ENCODE measurements at regions of chr6 and their contacts with region 1.

Region 1: DNA sequence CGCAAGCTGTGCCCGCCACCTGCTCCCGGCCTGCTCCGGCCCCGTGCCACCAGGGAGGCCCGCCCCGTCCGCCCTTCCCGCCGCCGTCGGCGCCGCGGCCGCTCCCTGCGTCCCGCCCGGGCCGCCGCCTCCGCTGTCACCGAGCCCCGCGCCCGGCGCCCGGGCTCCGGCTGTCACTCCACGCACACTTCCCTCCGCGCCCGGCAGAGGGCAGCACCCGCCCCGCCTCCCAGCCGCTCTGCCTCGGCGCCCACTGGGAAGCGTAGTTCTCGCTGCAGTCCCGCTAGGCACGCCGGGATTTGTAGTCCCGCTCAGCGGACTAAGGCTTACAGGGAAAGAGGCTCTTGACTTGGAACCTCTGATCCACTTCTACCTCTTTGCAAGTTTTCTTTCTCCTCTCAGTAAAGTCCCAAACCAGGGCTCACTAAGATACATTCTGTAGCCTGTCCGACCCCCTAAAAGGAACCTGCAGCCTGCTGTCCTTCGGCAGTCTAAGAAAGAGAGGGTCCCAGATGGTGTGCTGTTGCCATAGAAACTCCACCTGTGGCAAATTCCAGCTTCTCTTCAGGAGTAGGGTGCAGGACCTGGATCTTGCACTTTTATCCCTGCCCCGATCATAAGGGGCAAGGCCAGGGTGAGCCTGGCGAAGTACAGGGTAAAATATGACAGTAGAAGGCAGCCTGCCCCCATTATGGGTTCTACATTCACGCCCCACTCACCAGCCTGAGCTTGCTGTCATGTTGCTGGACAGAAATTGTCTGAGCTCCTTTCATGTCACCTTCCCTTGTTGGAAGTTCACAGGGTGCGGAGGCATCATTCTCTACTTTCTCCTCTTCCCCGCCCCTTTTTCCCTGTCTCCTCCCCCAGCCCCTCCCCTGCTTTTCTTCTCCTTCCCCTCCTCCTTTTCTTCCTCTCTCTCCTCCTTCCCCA is at the start of gene TFEB:
- DNase-seq: peak; percentile 93
- H3K4me3 ChIP-seq: peak within 1 kb of the TSS; percentile 91
- H3K27ac ChIP-seq: peak within 1 kb of the TSS; percentile 94
- H3K4me1 ChIP-seq: peaks cover 41% of the 10 kb centered on the region
- CTCF ChIP-seq: peak; percentile 76
- total RNA-seq, gene TFEB: 25.3 and 36.8 TPM in 2 replicates

Region 2: GRCh38 chr6:41072676-41073623 is 662.7 kb before region 1 on chr6 and contains the start of gene NFYA:
- CTCF ChIA-PET with region 1: interaction called, 6 read pairs
- POLR2A ChIA-PET with region 1: no interaction called
- intact Hi-C with region 1: loop called (anchors 5 kb)
- DNase-seq: peak; percentile 99
- H3K4me3 ChIP-seq: peak within 1 kb of the TSS; percentile 97
- H3K27ac ChIP-seq: peak within 1 kb of the TSS; percentile 92
- H3K4me1 ChIP-seq: peaks cover 47% of the 10 kb centered on the region
- CTCF ChIP-seq: peak; percentile 55
- total RNA-seq, gene NFYA: 23.5 and 29.5 TPM in 2 replicates

Region 3: GRCh38 chr6:41602864-41603608 is 132.7 kb before region 1 on chr6:
- CTCF ChIA-PET with region 1: no interaction called
- POLR2A ChIA-PET with region 1: no interaction called
- intact Hi-C with region 1: loop called (anchors 1 kb)
- DNase-seq: peak; percentile 89
- H3K4me3 ChIP-seq: peak overlapping the region; percentile 47
- H3K27ac ChIP-seq: no peak overlapping the region
- H3K4me1 ChIP-seq: peaks cover 9% of the 10 kb centered on the region
- CTCF ChIP-seq: peak; percentile 99

Region 4: DNA sequence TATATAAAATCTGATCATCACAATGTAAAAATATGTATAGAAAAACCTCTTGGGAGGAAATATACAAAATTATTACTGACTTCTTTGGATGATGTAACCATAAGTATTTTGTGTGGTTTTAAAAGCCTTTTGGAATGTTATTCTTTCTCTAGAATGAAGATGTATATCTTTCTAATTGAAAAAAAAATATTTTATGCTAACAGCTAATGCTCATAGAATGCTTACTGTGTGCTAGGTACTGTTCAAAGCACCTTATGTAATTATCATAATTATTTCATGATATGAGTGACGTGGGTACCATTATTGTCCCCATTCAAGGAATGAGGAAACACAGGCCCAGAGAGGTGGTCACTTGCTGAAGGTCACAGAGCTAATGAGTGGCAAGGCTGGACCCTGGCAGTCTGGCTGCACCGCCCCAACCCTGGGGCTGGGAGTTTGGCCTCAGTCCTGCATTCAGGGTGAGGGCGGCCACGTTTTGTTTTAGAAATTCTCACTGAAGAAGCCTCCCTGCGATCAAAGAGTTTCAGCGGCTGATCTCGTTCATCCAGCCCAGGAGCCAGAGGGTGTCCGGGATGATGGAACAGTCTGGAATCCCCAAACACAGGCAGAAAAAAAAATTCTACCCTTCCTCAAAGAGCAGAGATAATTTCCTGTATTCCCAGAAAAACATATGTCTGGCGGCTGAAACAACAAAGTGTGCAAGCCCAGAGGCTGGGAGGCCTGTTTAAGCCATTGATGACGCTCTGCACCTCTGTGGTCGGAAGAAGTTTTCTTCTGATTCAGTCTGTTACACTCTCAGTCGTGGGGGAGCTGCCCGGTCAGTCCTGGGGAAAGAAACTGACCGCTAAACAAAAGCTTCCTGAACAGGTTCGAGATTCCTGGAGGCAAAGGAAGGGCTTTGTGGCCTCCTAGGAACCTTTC is 37.6 kb before region 1 on chr6:
- CTCF ChIA-PET with region 1: interaction called, 3 read pairs
- POLR2A ChIA-PET with region 1: interaction called, 118 read pairs
- intact Hi-C with region 1: loop called (anchors 5 kb)
- DNase-seq: no peak
- H3K4me3 ChIP-seq: no peak overlapping the region
- H3K27ac ChIP-seq: no peak overlapping the region
- H3K4me1 ChIP-seq: peaks cover 13% of the 10 kb centered on the region
- CTCF ChIP-seq: no peak

Region 5: DNA sequence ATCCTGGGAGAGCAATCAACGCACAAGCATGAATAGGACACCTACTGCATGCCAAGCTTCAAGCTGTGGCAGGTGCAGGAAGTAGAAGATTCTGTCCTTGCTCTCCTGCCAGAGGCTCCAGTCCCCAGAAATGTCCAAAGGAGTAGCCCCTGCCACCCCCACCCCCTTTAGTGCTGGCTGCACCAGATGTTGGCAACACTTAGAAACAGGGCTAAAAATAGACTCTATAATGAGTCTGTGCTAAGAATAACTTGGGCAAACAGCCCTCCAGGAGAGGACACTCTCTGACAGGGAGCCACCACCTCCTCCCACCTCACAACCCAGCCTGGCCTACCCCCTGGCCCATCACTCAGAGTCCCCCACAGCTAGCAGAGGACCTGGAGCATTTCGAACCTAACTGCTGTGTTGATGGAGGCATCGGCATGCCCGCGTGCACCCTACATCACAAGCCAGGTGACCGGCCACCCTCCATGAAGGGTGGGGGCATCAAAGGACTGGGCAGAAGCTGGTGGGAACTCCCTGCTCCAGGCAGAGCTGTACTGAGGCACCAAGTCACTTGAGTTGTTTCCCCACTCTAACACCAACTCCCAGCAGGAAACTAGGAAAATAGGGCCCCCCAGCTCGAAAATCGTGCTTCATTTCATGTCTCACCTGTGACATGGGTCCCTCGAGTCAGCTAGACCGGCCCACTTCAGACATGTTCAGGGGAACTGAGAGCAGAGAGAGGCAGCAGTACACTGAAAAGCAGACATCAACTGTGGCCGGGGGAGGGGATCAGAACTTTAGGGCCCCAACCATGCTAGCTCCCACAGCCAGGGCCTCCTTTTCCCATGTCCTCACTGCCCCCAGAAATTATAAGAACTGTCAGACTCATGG is 18.9 kb before region 1 on chr6:
- CTCF ChIA-PET with region 1: interaction called, 12 read pairs
- POLR2A ChIA-PET with region 1: interaction called, 31 read pairs
- intact Hi-C with region 1: no loop called
- DNase-seq: peak; percentile 41
- H3K4me3 ChIP-seq: peak overlapping the region; percentile 29
- H3K27ac ChIP-seq: peak overlapping the region; percentile 63
- H3K4me1 ChIP-seq: peaks cover 81% of the 10 kb centered on the region
- CTCF ChIP-seq: no peak

Region 6: DNA sequence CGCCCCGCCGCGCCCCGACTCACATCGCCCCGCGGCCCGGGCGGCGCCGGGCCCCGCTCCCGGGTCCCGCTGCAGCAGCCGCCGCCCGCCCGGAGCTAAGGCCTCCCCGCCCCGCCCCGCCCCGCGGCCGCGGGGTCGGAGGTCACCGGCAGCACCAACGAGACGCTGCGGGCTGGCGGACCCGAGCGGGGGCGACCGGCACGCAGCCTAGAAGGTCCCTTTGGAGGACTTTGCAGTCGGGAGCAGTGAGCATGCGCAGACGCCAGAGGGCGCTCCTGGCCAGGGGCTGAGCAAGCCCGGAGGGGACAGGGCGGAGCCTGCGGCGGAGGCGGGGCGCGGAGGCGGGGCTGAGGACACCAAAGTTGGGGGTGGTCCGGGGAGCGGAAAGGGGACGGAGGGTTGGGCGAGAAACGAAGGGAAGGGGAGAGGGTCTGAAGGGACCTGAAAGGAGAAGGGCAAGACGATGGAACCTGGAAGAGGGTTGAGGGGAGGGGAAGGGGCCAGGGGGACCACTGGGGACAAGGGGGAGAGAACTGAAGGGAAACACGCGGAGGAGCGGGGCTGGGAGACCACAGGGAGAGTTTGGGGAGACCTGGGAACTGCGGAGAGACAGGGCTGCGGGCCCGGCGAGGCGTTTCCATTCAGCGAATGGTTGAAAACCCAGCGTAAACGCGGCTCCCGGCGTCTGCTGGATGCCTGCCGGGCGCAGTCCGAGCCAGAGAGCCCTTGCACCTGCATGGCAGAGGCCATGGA is 44.3 kb after region 1 on chr6 and contains the start of gene FRS3:
- CTCF ChIA-PET with region 1: interaction called, 4 read pairs
- POLR2A ChIA-PET with region 1: interaction called, 3 read pairs
- intact Hi-C with region 1: loop called (anchors 1 kb)
- DNase-seq: peak; percentile 97
- H3K4me3 ChIP-seq: peak within 1 kb of the TSS; percentile 83
- H3K27ac ChIP-seq: no peak within 1 kb of the TSS
- H3K4me1 ChIP-seq: peaks cover 28% of the 10 kb centered on the region
- CTCF ChIP-seq: peak; percentile 88
- total RNA-seq, gene FRS3: 5.6 and 8.2 TPM in 2 replicates